ENCODE measurements at regions of chr1 and their contacts with region 1.

Region 1: GRCh38 chr1:110460253-110461220 is 9.6 kb downstream of the PROK1 start:
- DNase-seq: peak; percentile 45 to 76
- ATAC-seq: peak; percentile 76 to 85 (median 81)
- H3K4me3 ChIP-seq: no peak overlapping the region
- H3K27ac ChIP-seq: no peak overlapping the region
- H3K4me1 ChIP-seq: no peaks in the 10 kb centered on the region
- H3K27me3 ChIP-seq: no peaks in the 10 kb centered on the region
- CTCF ChIP-seq: peak; percentile 78 to 98 (median 95)

Region 2: GRCh38 chr1:110203021-110203661 is 257.4 kb before region 1 on chr1:
- intact Hi-C with region 1: loop called (anchors 1 to 5 kb)
- DNase-seq: peak in 1 of 2 donors; percentile 67
- ATAC-seq: peak in 7 of 8 donors; percentile 31 to 73 (median 42)
- H3K4me3 ChIP-seq: no peak overlapping the region
- H3K27ac ChIP-seq: no peak overlapping the region
- H3K4me1 ChIP-seq: peaks cover 0 to 9% (median 4%) of the 10 kb centered on the region in 9 donors
- H3K27me3 ChIP-seq: no peaks in the 10 kb centered on the region
- CTCF ChIP-seq: peak; percentile 81 to 92 (median 89)

Region 3: GRCh38 chr1:110412576-110412975 is 48.0 kb before region 1 on chr1:
- intact Hi-C with region 1: loop called (anchors 1 to 5 kb)
- DNase-seq: peak; percentile 58 to 65
- ATAC-seq: peak; percentile 34 to 77 (median 44)
- H3K4me3 ChIP-seq: no peak overlapping the region
- H3K27ac ChIP-seq: no peak overlapping the region
- H3K4me1 ChIP-seq: peaks cover 9 to 32% (median 19%) of the 10 kb centered on the region in 9 donors
- H3K27me3 ChIP-seq: no peaks in the 10 kb centered on the region
- CTCF ChIP-seq: peak; percentile 62 to 83 (median 78)

Measured in heart right ventricle (tissue), 16 donors.